ENCODE measurements at regions of chr6 and their contacts with region 1.

Region 1: DNA sequence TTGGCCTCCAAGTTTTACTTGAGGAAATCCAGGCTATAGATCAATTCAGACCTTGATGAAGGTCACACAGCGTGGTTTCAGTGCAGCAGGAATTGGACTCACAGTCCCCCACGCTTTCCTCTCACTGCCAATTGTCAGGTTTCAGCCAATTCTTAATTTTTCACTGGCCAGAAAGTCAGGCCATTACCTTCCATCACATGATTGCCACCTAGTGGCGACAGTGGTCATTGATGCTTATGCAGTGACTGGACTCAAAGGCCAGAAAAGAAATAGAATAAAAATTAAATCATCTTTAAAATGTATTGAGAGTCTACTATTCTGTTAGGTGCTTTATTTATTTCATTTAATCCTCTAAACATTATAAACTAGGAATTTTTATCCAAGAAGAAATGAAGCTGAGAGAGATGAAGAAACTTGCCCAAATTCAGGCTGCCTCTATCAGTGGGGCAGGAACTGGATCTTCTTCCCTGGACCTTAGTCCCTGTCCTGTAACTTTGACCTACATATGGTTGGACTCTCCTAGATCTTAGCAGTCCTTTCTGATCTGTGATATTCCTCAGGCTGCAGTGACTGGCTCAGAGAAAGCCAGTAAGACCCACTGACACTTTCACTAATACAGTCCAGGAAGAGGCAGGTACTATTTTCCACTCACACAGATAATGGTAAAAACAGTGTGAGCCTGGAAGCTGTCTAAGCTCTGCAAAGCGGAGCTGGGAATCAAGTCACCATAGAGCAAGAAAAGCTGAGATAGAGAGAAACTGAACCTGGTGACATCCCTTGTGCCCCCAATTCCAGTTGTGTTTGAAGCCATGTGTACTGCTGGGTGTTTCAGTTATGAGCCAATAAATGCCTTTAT is 133.3 kb downstream of the ELOVL4 start:
- DNase-seq: peak; percentile 86
- H3K4me3 Mint-ChIP-seq: no peak overlapping the region
- H3K27ac Mint-ChIP-seq: no peak overlapping the region
- H3K4me1 Mint-ChIP-seq: no peaks in the 10 kb centered on the region
- H3K27me3 Mint-ChIP-seq: peaks cover 12% of the 10 kb centered on the region

Region 2: DNA sequence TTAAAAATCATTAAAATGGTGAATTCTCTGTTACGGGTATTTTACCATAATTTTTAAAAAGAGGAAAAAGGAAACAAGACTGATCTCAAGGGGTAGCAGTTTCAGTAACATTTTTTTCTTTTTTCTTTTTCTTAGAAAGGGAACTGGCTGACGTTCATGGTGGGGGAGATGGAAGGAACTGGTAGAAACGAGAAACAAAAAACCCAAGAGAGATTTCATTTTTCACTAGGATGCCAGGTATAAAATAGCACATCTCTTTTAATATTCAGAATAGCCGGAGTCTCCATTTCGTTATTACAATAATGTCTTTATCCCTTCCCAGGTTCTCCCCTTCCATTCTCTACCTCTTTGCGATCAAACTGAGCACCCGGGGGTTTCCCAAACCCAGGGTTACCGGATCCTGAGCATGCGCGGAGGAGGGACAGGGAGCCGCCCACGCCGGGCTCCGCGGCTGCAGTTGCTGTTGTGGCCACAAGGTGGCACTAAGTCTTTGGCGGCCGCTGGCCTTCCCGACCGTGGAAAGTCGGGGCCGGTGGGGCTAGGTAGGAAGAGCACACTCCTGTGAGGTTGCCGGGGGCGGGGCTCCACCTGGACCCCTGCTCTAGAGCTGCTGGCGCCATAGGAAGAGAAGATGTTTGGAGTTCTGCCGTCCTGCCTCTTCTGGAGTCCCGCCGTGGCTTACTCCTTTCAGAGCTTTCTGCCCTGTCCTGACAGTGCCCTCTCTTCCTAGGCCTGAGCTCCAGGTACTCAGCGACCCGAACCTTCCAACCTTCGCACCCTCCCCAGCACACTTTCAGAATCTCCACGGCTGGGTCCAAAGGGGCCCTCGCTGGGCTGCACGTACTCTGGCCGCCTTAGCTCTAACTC is 36.1 kb before region 1 on chr6:
- intact Hi-C with region 1: loop called (anchors 1 kb)
- DNase-seq: peak; percentile 97
- H3K4me3 Mint-ChIP-seq: peak overlapping the region; percentile 79
- H3K27ac Mint-ChIP-seq: peak overlapping the region; percentile 57
- H3K4me1 Mint-ChIP-seq: peaks cover 9% of the 10 kb centered on the region
- H3K27me3 Mint-ChIP-seq: no peaks in the 10 kb centered on the region